WTC11 (cell line): ENCODE measurements at regions of chr2 and their contacts with region 1.

Region 1: GRCh38 chr2:10408649-10409579 is 39.2 kb downstream of the ODC1 start:
- DNase-seq: peak; percentile 90
- ATAC-seq: peak; percentile 94
- H3K4me3 Mint-ChIP-seq: no peak overlapping the region
- H3K27ac Mint-ChIP-seq: no peak overlapping the region
- H3K4me1 Mint-ChIP-seq: peaks cover 9% of the 10 kb centered on the region
- H3K27me3 Mint-ChIP-seq: no peaks in the 10 kb centered on the region
- CTCF ChIP-seq: peak; percentile 93

Region 2: GRCh38 chr2:10135296-10136089 is 273.4 kb before region 1 on chr2:
- CTCF ChIA-PET with region 1: interaction called, 17 read pairs
- POLR2A ChIA-PET with region 1: no interaction called
- DNase-seq: no peak
- ATAC-seq: no peak
- H3K4me3 Mint-ChIP-seq: no peak overlapping the region
- H3K27ac Mint-ChIP-seq: peak overlapping the region; percentile 64; the same call in 1 of the 2 replicates
- H3K4me1 Mint-ChIP-seq: peaks cover 39% of the 10 kb centered on the region
- H3K27me3 Mint-ChIP-seq: no peaks in the 10 kb centered on the region
- CTCF ChIP-seq: no peak

Region 3: DNA sequence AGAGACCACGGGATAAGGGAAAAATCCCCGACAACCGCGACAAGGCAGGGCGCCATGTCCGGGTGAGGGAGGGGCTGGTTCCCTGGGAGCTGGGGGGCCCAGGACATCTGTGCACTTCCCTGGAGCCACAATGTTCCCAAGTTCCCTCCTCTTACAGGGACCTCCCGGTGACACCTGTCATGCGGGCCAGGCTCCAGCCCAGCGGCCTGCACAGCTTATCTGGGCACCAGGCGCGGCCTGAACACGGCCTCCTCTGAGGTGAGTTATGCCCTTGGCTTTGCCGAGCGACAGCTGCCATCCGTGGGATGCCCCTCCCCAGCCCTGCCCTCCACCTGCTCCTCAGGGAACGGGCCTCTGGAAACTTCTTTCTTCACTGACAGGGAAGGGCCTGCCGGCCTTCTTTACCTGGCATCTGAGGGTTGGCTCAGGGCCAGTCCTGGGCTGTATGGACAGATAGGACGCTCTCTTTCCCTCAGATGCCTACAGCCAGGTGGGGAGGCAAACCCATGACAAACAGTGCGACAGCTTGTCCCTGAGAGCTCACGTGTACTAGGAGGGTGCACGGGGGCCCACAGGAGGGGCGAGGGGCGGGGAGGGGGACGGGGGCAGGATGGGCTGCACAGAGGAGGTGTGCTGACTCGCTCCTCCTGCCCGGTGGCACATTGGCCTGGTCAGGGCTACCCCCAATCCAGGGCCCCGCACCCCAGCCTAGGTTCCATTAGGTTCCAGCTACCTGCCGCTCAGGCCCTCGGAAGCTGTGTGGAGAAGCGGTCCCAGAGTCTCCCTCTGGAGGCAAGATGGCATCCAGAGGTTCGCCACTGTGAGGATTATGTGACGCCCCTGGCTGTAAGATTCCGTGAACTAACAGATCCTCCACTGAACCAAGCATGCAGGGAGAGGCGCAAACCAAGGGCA is 141.1 kb before region 1 on chr2:
- CTCF ChIA-PET with region 1: interaction called, 31 read pairs
- POLR2A ChIA-PET with region 1: interaction called, 5 read pairs
- DNase-seq: peak; percentile 37
- ATAC-seq: peak; percentile 68
- H3K4me3 Mint-ChIP-seq: no peak overlapping the region
- H3K27ac Mint-ChIP-seq: no peak overlapping the region
- H3K4me1 Mint-ChIP-seq: no peaks in the 10 kb centered on the region
- H3K27me3 Mint-ChIP-seq: no peaks in the 10 kb centered on the region
- CTCF ChIP-seq: no peak

Region 4: DNA sequence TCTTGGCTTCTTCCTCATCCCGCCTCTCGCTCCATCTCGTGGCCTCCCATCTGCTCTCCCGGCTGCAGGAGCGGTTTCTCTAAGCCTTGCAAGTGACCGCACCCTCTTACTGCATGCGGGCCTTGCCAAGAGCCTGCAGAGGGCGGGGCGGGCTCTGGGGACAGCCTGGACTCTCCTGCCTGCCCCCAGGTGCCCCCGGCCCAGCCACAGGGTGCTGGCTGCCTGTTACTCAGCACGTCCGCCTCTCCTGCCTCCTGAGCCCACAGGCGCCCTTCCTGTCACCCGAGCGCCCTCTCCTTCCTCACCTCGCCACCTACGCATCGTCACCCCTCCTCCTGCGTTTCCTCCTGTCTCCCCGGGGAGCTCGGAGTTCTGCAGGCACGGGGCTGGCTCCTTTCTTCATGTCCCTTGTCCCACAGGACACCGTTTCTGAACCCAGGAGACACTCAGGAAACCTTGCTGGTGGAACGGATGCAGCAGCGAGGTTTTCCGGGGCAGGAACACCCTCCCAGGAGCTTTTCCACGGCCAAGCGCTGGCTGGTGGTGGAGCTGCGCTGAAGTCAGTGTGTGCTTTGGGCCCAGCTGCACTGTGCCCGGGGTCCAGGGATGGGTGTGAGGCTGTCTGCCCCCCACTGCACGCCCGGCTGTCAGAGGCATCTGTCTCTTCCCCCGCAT is 77.8 kb before region 1 on chr2:
- CTCF ChIA-PET with region 1: interaction called, 31 read pairs
- POLR2A ChIA-PET with region 1: no interaction called
- DNase-seq: peak; percentile 42
- ATAC-seq: peak; percentile 46
- H3K4me3 Mint-ChIP-seq: no peak overlapping the region
- H3K27ac Mint-ChIP-seq: no peak overlapping the region; the same call in 1 of the 2 replicates
- H3K4me1 Mint-ChIP-seq: peaks cover 64% of the 10 kb centered on the region
- H3K27me3 Mint-ChIP-seq: no peaks in the 10 kb centered on the region
- CTCF ChIP-seq: no peak

Region 5: GRCh38 chr2:10392951-10393644 is 15.8 kb before region 1 on chr2:
- CTCF ChIA-PET with region 1: interaction called, 34 read pairs
- POLR2A ChIA-PET with region 1: no interaction called
- DNase-seq: no peak
- ATAC-seq: peak; percentile 77
- H3K4me3 Mint-ChIP-seq: no peak overlapping the region
- H3K27ac Mint-ChIP-seq: 0 out of 2 replicates have a peak overlapping the region, but pooled peaks have one; percentile 36
- H3K4me1 Mint-ChIP-seq: peaks cover 31% of the 10 kb centered on the region
- H3K27me3 Mint-ChIP-seq: no peaks in the 10 kb centered on the region
- CTCF ChIP-seq: no peak

Region 6: DNA sequence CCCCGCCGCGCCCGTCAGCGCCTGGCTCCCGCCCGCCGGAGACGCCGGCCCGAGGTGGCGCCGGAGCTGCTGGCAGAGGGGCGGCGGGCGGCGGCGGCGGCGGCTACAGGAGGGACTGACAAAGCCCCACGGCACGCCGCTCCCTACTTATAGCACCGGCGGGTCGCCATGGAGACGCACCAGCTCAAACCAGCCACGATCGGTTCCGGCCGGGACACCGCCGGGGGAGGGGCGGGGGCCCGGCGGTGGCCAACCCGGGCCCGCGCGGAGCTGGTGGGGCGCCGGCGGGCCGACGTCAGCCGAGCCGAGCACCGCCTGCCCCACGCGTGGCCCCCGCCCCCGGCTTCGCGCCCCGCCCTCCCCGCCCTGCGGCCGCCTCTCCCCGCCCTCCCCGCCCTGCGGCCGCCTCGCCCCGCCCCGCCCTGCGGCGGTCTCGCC is 39.3 kb after region 1 on chr2 and contains the start of gene ODC1:
- CTCF ChIA-PET with region 1: interaction called, 17 read pairs
- POLR2A ChIA-PET with region 1: no interaction called
- DNase-seq: peak; percentile 90
- ATAC-seq: peak; percentile 66
- H3K4me3 Mint-ChIP-seq: peak within 1 kb of the TSS; percentile 74
- H3K27ac Mint-ChIP-seq: no peak within 1 kb of the TSS
- H3K4me1 Mint-ChIP-seq: peaks cover 18% of the 10 kb centered on the region
- H3K27me3 Mint-ChIP-seq: peaks cover 22% of the 10 kb centered on the region
- CTCF ChIP-seq: no peak
- total RNA-seq, gene ODC1: 42.3 to 46.6 TPM (median 42.8 TPM) in 3 replicates

Region 7: GRCh38 chr2:10584796-10585475 is 176.0 kb after region 1 on chr2:
- CTCF ChIA-PET with region 1: no interaction called
- POLR2A ChIA-PET with region 1: no interaction called
- DNase-seq: no peak
- ATAC-seq: no peak
- H3K4me3 Mint-ChIP-seq: no peak overlapping the region
- H3K27ac Mint-ChIP-seq: no peak overlapping the region
- H3K4me1 Mint-ChIP-seq: peaks cover 12% of the 10 kb centered on the region
- H3K27me3 Mint-ChIP-seq: no peaks in the 10 kb centered on the region
- CTCF ChIP-seq: no peak

Region 8: DNA sequence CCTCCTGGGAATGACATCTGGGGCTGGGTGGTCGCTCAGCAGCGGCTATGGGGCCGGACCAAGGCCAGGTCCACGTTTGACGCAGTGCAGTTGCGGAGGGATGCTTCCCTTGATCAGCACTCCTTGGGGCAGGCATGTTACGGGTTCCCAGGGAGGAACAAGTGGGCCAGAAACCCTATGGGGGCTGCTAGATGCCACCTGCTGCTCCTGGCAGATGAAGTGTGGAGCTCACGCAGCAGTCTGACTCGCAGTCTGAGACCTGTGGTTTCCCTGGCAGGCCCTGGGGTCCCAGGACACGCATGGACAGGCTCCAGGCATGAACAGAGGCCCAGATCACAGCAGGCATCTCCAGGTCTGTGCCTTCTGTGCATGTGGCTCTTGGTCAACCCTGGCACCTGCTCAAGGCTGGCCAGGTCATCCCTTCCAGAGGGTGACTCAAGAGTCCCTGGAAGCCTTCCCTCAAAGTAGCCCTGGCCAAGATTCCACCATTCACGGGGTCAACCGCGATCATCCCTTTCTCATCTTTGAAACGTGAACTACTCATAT is 522.9 kb after region 1 on chr2:
- CTCF ChIA-PET with region 1: no interaction called
- POLR2A ChIA-PET with region 1: no interaction called
- DNase-seq: no peak
- ATAC-seq: no peak
- H3K4me3 Mint-ChIP-seq: no peak overlapping the region
- H3K27ac Mint-ChIP-seq: no peak overlapping the region
- H3K4me1 Mint-ChIP-seq: peaks cover 33% of the 10 kb centered on the region
- H3K27me3 Mint-ChIP-seq: no peaks in the 10 kb centered on the region
- CTCF ChIP-seq: no peak